WTC11 (cell line): ENCODE measurements at regions of chr15 and their contacts with region 1.

Region 1: DNA sequence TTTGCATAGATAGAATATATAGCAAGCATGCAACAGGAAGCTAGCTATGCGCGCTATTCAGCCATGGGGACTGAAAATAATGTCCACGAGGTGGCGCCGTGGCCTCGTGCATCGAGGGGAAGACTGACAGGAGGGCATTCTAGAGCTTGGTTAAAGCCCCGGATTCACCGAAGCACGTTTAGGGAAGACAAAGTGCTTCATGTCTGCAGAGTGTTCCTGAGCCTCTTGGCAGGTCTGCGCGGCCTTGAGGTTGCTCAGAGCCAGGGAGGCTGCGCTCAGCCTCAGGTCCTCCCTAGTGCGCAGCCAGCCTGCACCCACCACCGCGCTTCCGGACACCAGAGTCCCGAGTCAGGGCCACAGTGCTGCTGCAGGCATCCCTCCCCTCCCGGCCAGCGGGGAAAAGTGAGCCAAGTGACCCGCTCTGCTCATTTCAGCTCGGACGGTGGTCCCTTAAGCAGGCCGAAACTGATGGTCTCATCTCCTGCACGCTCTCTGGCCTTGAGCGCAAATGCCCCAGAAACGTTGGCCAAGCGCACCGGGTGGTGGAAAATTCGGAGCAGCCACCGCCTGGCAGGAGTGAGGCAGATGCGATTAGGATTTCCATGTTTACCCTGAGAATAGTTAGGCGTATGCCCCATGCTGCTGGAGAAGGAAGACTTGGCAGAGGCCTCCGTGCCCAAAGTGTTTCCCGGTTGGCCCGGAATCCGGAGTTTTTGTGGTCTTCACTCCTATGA is 24.8 kb downstream of the GABRA5 start:
- DNase-seq: peak; percentile 90
- ATAC-seq: peak; percentile 87
- H3K4me3 Mint-ChIP-seq: no peak overlapping the region
- H3K27ac Mint-ChIP-seq: no peak overlapping the region
- H3K4me1 Mint-ChIP-seq: peaks cover 8% of the 10 kb centered on the region
- H3K27me3 Mint-ChIP-seq: no peaks in the 10 kb centered on the region
- CTCF ChIP-seq: peak; percentile 59

Region 2: DNA sequence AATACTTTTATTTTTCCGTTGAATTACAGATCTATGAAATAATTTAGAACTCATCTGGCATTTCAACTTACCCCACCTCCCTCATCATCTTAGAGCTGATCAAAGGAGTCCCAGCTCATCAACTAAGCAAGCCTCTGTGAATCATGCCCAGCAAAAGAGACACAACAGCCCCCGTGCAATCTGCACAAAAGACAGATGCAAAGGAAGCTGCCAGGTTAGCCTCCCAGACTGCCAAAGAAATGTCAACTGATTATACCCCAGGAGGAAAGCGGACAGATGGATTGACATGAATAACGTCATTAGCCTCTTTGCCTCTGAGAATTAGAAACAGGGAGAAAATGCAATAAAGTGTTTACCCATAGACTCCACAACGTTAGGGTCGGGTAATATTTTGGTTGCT is 193.7 kb before region 1 on chr15:
- CTCF ChIA-PET with region 1: no interaction called
- POLR2A ChIA-PET with region 1: no interaction called
- DNase-seq: no peak
- ATAC-seq: no peak
- H3K4me3 Mint-ChIP-seq: no peak overlapping the region
- H3K27ac Mint-ChIP-seq: no peak overlapping the region
- H3K4me1 Mint-ChIP-seq: peaks cover 67% of the 10 kb centered on the region
- H3K27me3 Mint-ChIP-seq: no peaks in the 10 kb centered on the region
- CTCF ChIP-seq: no peak

Region 3: DNA sequence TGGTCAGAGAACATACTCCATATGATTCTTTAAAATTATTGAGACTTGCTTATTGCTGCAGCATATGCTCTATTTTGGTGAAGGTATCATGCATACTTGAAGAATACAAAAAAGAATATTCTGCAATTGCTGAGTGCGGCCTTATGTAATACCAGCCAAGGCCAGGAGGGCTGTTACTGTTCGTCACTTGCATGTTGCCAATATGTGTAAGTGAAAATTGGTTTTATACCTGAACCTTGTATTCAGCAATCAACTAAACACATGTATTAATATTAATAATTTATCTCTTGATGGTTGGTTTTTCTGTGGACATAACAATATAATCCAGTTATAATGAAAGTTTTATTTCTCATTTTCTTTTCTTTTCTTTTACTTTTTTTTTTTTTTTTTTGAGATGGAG is 38.6 kb before region 1 on chr15:
- CTCF ChIA-PET with region 1: no interaction called
- POLR2A ChIA-PET with region 1: no interaction called
- DNase-seq: no peak
- ATAC-seq: no peak; the same call in 1 of the 2 replicates
- H3K4me3 Mint-ChIP-seq: no peak overlapping the region
- H3K27ac Mint-ChIP-seq: no peak overlapping the region
- H3K4me1 Mint-ChIP-seq: no peaks in the 10 kb centered on the region; the same call in 1 of the 2 replicates
- H3K27me3 Mint-ChIP-seq: 0 out of 2 replicates have a peak, but pooled peaks cover 2% of the 10 kb centered on the region
- CTCF ChIP-seq: no peak

Region 4: DNA sequence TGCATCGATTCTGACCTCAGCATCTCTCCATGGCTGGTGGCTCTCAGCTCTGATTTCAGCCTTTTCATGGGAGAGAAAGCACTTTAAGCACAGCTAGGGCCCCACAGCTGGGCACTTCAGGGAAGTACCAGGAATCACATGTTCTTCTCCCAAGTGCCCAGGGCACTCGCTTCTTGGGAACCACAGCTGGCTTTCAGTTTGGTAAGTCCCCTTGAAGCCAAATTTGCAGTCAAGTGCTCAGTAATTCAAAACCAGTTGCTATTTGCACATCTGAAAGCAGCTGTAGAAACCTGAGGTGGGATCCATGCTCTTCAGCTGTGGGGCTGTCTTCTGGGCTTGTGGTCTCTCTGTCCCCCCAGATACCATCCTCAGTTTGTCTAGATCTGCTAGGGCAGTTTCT is 11.9 kb before region 1 on chr15:
- CTCF ChIA-PET with region 1: interaction called, 10 read pairs
- POLR2A ChIA-PET with region 1: no interaction called
- DNase-seq: no peak
- ATAC-seq: no peak
- H3K4me3 Mint-ChIP-seq: no peak overlapping the region
- H3K27ac Mint-ChIP-seq: no peak overlapping the region
- H3K4me1 Mint-ChIP-seq: no peaks in the 10 kb centered on the region; the same call in 1 of the 2 replicates
- H3K27me3 Mint-ChIP-seq: no peaks in the 10 kb centered on the region
- CTCF ChIP-seq: no peak

Region 5: DNA sequence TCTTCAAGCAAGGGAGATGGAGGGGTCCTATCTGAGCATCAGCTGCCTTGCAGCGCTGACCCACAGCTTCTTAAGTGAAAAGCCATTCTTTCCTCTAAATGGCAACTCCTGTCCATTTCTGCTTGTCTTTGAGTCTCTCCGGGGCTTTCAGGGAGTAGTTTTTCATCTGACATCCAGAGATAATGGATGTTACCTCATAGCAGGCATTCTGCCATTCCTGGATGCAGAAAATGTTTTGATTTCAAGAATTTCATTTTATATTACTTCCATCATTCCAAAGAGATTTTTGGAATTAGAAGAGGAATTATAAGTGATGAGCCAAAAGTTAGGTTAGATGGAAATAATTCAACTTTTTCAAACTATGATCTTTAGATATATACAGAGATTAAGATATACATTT is 34.5 kb after region 1 on chr15:
- CTCF ChIA-PET with region 1: interaction called, 11 read pairs
- POLR2A ChIA-PET with region 1: no interaction called
- DNase-seq: no peak
- ATAC-seq: no peak
- H3K4me3 Mint-ChIP-seq: no peak overlapping the region
- H3K27ac Mint-ChIP-seq: no peak overlapping the region
- H3K4me1 Mint-ChIP-seq: peaks cover 2% of the 10 kb centered on the region; the same call in 1 of the 2 replicates
- H3K27me3 Mint-ChIP-seq: no peaks in the 10 kb centered on the region
- CTCF ChIP-seq: no peak

Region 6: GRCh38 chr15:26974120-26974780 is 82.6 kb after region 1 on chr15:
- CTCF ChIA-PET with region 1: interaction called, 38 read pairs
- POLR2A ChIA-PET with region 1: no interaction called
- DNase-seq: peak; percentile 40
- ATAC-seq: peak; percentile 55
- H3K4me3 Mint-ChIP-seq: peak overlapping the region; percentile 18; the same call in 1 of the 2 replicates
- H3K27ac Mint-ChIP-seq: no peak overlapping the region
- H3K4me1 Mint-ChIP-seq: peaks cover 7% of the 10 kb centered on the region
- H3K27me3 Mint-ChIP-seq: peaks cover 44% of the 10 kb centered on the region
- CTCF ChIP-seq: peak; percentile 51

Region 7: DNA sequence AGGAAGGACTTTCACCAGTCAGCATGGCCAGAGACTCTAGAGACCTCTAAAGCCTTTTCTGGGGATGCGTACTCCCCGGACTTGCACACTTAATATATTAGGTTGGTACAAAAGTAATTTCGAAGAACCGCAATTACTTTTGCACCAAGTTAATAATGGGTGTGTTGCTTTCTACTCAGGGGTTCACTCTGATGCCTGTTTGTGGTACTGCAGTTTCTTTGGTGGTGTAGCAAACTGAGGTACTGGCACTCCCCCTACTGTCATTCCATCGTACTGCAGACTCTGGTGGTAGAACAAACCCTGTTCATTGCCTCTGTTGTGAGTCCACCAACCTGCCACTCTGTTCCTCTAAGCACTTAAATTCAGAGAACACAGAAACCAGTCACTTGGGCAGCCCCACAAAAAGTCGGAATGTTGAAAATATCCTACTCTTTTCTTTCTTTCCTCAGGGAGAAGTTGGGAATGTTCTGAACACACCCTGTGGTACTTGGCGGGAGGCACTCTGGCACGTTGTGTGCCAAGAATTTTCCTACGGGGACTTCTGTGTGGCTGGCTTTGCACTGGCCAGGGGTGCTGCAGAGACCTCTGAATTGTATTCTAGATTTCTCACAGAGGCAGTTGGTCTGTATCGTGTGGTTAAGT is 125.7 kb after region 1 on chr15:
- CTCF ChIA-PET with region 1: interaction called, 41 read pairs
- POLR2A ChIA-PET with region 1: no interaction called
- DNase-seq: peak; percentile 91
- ATAC-seq: peak; percentile 98
- H3K4me3 Mint-ChIP-seq: no peak overlapping the region
- H3K27ac Mint-ChIP-seq: no peak overlapping the region
- H3K4me1 Mint-ChIP-seq: no peaks in the 10 kb centered on the region
- H3K27me3 Mint-ChIP-seq: no peaks in the 10 kb centered on the region
- CTCF ChIP-seq: peak; percentile 84

Region 8: GRCh38 chr15:27046880-27047279 is 155.3 kb after region 1 on chr15:
- CTCF ChIA-PET with region 1: interaction called, 29 read pairs
- POLR2A ChIA-PET with region 1: no interaction called
- DNase-seq: no peak
- ATAC-seq: no peak
- H3K4me3 Mint-ChIP-seq: no peak overlapping the region
- H3K27ac Mint-ChIP-seq: no peak overlapping the region
- H3K4me1 Mint-ChIP-seq: no peaks in the 10 kb centered on the region
- H3K27me3 Mint-ChIP-seq: no peaks in the 10 kb centered on the region
- CTCF ChIP-seq: no peak

Region 9: GRCh38 chr15:27358751-27359434 is 467.3 kb after region 1 on chr15:
- CTCF ChIA-PET with region 1: interaction called, 46 read pairs
- POLR2A ChIA-PET with region 1: no interaction called
- DNase-seq: peak; percentile 82
- ATAC-seq: peak; percentile 88
- H3K4me3 Mint-ChIP-seq: peak overlapping the region; percentile 51
- H3K27ac Mint-ChIP-seq: no peak overlapping the region
- H3K4me1 Mint-ChIP-seq: peaks cover 8% of the 10 kb centered on the region
- H3K27me3 Mint-ChIP-seq: no peaks in the 10 kb centered on the region
- CTCF ChIP-seq: peak; percentile 94